CD4-positive, alpha-beta memory T cell (primary cell): ENCODE measurements at regions of chr19 and their contacts with region 1.

Region 1: GRCh38 chr19:4988770-4989251 is 19.9 kb downstream of the KDM4B start:
- DNase-seq: no peak
- H3K4me3 ChIP-seq: no peak overlapping the region
- H3K4me3 Mint-ChIP-seq: no peak overlapping the region
- H3K27ac ChIP-seq: no peak overlapping the region
- H3K27ac Mint-ChIP-seq: peak overlapping the region in 1 of 7 donors; percentile 83
- H3K4me1 ChIP-seq: peaks cover 3% of the 10 kb centered on the region
- H3K4me1 Mint-ChIP-seq: peaks cover 13 to 48% (median 19%) of the 10 kb centered on the region in 4 donors
- H3K27me3 ChIP-seq: no peaks in the 10 kb centered on the region
- H3K27me3 Mint-ChIP-seq: no peaks in the 10 kb centered on the region

Region 2: DNA sequence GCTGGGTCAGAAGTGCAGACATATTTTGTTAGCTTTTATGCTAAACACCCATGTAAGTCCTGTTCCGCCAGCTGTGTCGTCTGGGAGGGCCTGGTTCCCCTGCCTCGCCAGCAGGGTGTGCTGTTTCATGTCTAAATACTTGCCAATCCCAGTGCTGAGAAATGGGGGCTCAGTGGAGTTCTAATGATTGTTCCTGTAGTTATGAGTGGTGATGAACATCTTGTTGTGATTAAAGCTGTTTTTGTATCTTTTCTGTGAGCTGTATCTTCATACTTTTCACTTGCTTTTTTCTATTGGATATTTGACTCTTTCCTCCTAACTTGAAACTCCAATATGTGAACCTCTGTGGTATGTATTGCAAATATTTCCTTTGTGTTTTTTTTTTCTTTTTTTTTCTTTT is 12.8 kb after region 1 on chr19:
- CTCF ChIA-PET with region 1: interaction called, 11 read pairs
- POLR2A ChIA-PET with region 1: no interaction called
- intact Hi-C with region 1: no loop called
- DNase-seq: peak in 4 of 5 donors; percentile 6 to 19 (median 12)
- H3K4me3 ChIP-seq: no peak overlapping the region
- H3K4me3 Mint-ChIP-seq: no peak overlapping the region
- H3K27ac ChIP-seq: no peak overlapping the region
- H3K27ac Mint-ChIP-seq: peak overlapping the region in 1 of 7 donors; percentile 79
- H3K4me1 ChIP-seq: no peaks in the 10 kb centered on the region
- H3K4me1 Mint-ChIP-seq: peaks cover 12 to 27% (median 16%) of the 10 kb centered on the region in 4 donors
- H3K27me3 ChIP-seq: no peaks in the 10 kb centered on the region
- H3K27me3 Mint-ChIP-seq: no peaks in the 10 kb centered on the region